Naive thymus-derived CD4-positive, alpha-beta T cell (primary cell): ENCODE measurements at regions of chr2 and their contacts with region 1.

Region 1: DNA sequence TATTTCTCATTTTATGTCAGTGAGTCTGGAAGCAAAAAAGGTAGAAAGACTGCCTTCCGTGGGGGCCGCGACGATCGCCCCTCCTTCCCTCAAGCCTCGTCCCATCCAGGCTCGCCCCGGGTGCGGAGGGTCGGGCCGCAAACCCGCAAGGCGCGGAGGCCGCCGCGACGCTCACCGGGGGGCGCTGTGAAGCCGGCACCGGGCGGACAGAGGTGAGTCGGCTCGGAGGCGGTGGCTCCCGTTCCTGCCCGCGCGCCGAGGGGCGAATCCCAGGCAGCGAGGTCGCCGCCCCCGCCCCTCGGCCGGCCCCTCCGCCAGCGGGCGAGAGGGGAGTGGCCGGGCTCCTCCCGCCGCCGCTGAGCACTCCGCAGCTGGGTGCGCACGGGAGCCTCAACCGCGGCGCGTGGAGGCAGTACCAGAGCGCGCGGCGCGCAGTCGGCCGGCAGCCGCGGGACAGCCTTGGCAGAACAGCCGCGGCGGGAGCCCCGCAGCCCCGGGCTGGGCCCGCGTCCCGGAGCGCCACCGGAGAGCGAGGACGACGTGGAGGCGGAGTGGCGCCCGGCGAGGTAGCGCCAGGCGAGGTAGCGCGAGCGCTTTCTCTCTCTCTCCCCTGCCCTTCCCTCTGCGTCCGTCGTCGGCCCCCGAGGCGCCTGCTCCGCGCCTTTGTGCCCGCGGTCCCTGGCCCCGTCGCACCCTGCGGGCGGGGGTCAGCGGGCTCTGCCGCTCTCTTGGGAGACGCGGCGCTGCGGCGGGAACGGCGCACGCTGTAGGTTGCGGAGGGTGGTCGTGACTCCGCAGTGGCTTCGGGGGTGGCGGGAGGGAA is at the start of gene MYO1B:
- DNase-seq: peak; percentile 18 to 78 (median 31)
- ATAC-seq: peak; percentile 78
- H3K4me3 ChIP-seq: peak within 1 kb of the TSS; percentile 50
- H3K4me3 Mint-ChIP-seq: peak within 1 kb of the TSS; percentile 78 to 90 (median 84)
- H3K27ac ChIP-seq: no peak within 1 kb of the TSS
- H3K27ac Mint-ChIP-seq: peak within 1 kb of the TSS in 4 of 9 donors; percentile 42 to 67 (median 61)
- H3K4me1 ChIP-seq: no peaks in the 10 kb centered on the region
- H3K4me1 Mint-ChIP-seq: peaks cover 6 to 16% (median 9%) of the 10 kb centered on the region in 7 donors
- H3K27me3 ChIP-seq: peaks cover 0 to 4% of the 10 kb centered on the region in 2 donors
- H3K27me3 Mint-ChIP-seq: peaks cover 6 to 37% (median 20%) of the 10 kb centered on the region in 5 donors
- total RNA-seq, gene MYO1B: 0.43 to 14.9 (median 0.54) TPM

Region 2: DNA sequence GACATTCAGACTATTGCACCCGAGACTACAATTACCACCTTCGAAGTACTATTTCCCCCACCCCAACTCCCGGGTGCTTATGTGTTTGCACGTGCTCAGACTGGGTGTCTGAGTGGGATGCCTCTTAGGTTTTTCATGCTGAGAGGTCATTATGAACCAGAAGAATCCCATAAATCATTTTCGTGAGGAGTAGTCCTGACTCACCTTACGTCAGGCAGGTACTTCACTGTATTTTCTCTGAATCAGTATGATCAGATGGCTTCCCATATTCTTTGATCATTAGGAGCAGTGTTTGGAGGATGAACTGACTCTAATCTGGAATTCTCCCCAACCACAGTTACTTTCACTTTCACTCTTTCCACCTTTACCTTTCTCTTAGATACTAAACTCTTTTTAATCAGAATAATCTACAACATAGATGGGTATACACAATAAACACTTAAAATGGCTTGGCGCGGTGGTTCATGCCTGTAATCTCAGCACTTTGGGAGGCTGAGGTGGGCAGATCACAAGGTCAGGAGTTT is 56.1 kb before region 1 on chr2:
- CTCF ChIA-PET with region 1: interaction called, 4 read pairs
- POLR2A ChIA-PET with region 1: no interaction called
- intact Hi-C with region 1: loop called (anchors 2 kb)
- DNase-seq: peak in 3 of 9 donors; percentile 13 to 20 (median 14)
- ATAC-seq: no peak
- H3K4me3 ChIP-seq: peak overlapping the region; percentile 40
- H3K4me3 Mint-ChIP-seq: peak overlapping the region; percentile 70 to 91 (median 83)
- H3K27ac ChIP-seq: peak overlapping the region; percentile 21
- H3K27ac Mint-ChIP-seq: peak overlapping the region; percentile 59 to 95 (median 91)
- H3K4me1 ChIP-seq: peaks cover 19 to 20% of the 10 kb centered on the region in 2 donors
- H3K4me1 Mint-ChIP-seq: peaks cover 17 to 69% (median 61%) of the 10 kb centered on the region in 7 donors
- H3K27me3 ChIP-seq: no peaks in the 10 kb centered on the region
- H3K27me3 Mint-ChIP-seq: no peaks in the 10 kb centered on the region

Region 3: GRCh38 chr2:191195021-191195420 is 50.2 kb before region 1 on chr2:
- CTCF ChIA-PET with region 1: no interaction called
- POLR2A ChIA-PET with region 1: no interaction called
- intact Hi-C with region 1: loop called in 1 of 2 experiments (anchors 2 kb)
- DNase-seq: no peak
- ATAC-seq: no peak
- H3K4me3 ChIP-seq: no peak overlapping the region
- H3K4me3 Mint-ChIP-seq: peak overlapping the region in 5 of 10 donors; percentile 28 to 61 (median 47)
- H3K27ac ChIP-seq: peak overlapping the region; percentile 43
- H3K27ac Mint-ChIP-seq: peak overlapping the region; percentile 74 to 93 (median 88)
- H3K4me1 ChIP-seq: peaks cover 25 to 27% of the 10 kb centered on the region in 2 donors
- H3K4me1 Mint-ChIP-seq: peaks cover 13 to 65% (median 56%) of the 10 kb centered on the region in 7 donors
- H3K27me3 ChIP-seq: no peaks in the 10 kb centered on the region
- H3K27me3 Mint-ChIP-seq: no peaks in the 10 kb centered on the region

Region 4: DNA sequence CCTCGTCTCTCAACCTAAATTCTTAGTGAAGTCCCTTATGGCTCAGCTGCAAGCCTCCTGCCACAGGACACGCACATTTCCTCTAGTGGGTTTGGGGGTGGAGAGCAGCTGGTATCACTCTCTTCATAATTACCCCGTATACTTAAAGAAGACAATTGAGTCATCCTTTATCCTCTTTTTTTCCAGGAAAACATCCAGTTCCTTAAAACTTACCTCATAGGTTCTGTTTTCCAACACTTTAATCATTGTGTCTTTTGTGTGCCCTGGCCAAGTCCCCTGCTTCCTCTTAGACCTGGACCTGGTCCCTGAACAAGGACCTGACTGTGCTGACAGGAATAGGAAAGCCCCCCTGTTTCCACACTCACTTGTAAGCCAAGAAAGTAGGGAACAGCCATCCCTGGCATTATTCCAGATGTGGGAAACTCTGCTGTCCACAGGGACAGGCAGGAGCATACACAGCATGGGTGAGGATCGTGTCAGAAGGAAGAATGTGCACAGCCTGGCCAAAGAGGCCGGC is 42.3 kb before region 1 on chr2:
- CTCF ChIA-PET with region 1: no interaction called
- POLR2A ChIA-PET with region 1: interaction called, 3 read pairs
- intact Hi-C with region 1: loop called in 1 of 2 experiments (anchors 2 kb)
- DNase-seq: no peak
- ATAC-seq: no peak
- H3K4me3 ChIP-seq: no peak overlapping the region
- H3K4me3 Mint-ChIP-seq: peak overlapping the region in 7 of 10 donors; percentile 6 to 62 (median 13)
- H3K27ac ChIP-seq: no peak overlapping the region
- H3K27ac Mint-ChIP-seq: peak overlapping the region in 5 of 9 donors; percentile 13 to 79 (median 37)
- H3K4me1 ChIP-seq: peaks cover 22 to 33% of the 10 kb centered on the region in 2 donors
- H3K4me1 Mint-ChIP-seq: peaks cover 25 to 54% (median 44%) of the 10 kb centered on the region in 7 donors
- H3K27me3 ChIP-seq: no peaks in the 10 kb centered on the region
- H3K27me3 Mint-ChIP-seq: no peaks in the 10 kb centered on the region

Region 5: GRCh38 chr2:191521608-191522208 is 276.5 kb after region 1 on chr2:
- CTCF ChIA-PET with region 1: no interaction called
- POLR2A ChIA-PET with region 1: no interaction called
- intact Hi-C with region 1: loop called in 1 of 2 experiments (anchors 10 kb)
- DNase-seq: peak in 5 of 9 donors; percentile 16 to 51 (median 33)
- ATAC-seq: no peak
- H3K4me3 ChIP-seq: no peak overlapping the region
- H3K4me3 Mint-ChIP-seq: no peak overlapping the region
- H3K27ac ChIP-seq: no peak overlapping the region
- H3K27ac Mint-ChIP-seq: no peak overlapping the region
- H3K4me1 ChIP-seq: no peaks in the 10 kb centered on the region
- H3K4me1 Mint-ChIP-seq: no peaks in the 10 kb centered on the region
- H3K27me3 ChIP-seq: no peaks in the 10 kb centered on the region
- H3K27me3 Mint-ChIP-seq: peaks cover 0 to 28% (median 7%) of the 10 kb centered on the region in 5 donors